ENCODE measurements at regions of chr6 and their contacts with region 1.

Region 1: DNA sequence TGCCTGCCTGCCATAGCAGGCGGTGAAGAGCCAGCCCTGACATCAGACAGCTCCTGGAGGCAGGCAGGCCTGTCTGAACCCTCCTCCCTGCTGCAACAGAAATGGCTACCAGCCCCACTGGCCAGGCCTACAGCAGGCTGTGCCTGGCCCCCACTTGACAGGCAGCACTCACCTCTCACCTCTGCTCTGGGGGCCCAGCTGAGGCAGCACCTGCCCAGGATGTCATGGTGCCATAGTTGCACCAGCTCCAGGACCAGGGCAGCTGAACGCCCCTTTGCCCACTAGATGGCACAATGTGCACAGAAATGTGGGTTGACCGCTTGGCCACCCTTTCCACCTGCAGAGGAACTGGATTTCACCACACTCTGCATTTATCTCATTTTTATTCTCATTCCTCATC is 30.6 kb downstream of the MRPL14 start:
- DNase-seq: peak; percentile 69 to 87 (median 78)
- ATAC-seq: peak; percentile 82 to 92 (median 88)
- H3K4me3 ChIP-seq: no peak overlapping the region
- H3K27ac ChIP-seq: no peak overlapping the region
- H3K4me1 ChIP-seq: peaks cover 0 to 10% (median 0%) of the 10 kb centered on the region in 3 donors
- H3K27me3 ChIP-seq: no peaks in the 10 kb centered on the region
- CTCF ChIP-seq: peak; percentile 62 to 76 (median 70)

Region 2: DNA sequence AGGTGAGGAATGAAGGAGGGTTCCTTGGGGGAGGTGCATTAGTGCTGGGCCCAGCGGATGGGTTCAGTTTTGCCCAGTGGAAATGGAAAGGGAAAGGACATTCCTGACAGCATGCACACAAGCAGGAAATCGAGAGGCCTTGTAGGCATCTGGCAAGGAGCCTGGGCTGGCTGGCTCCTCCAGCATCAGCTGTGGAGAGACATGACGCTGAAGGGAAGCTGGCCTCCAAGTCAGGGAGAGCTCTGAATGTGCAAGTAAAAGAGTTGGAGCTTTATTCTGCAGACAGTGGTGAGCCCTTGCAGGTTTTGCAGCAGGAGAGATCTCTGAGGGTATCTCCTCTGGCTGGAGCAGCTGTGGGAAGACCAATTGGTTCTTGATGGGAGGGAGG is 123.7 kb before region 1 on chr6:
- intact Hi-C with region 1: no loop called
- DNase-seq: peak in 5 of 6 donors; percentile 79 to 83 (median 80)
- ATAC-seq: peak; percentile 66 to 85 (median 73)
- H3K4me3 ChIP-seq: no peak overlapping the region
- H3K27ac ChIP-seq: peak overlapping the region; percentile 57 to 80 (median 61)
- H3K4me1 ChIP-seq: peaks cover 32 to 39% (median 35%) of the 10 kb centered on the region in 3 donors
- H3K27me3 ChIP-seq: no peaks in the 10 kb centered on the region
- CTCF ChIP-seq: no peak

Region 3: GRCh38 chr6:44135875-44136274 is 39.3 kb after region 1 on chr6:
- intact Hi-C with region 1: loop called in 1 of 3 experiments (anchors 5 kb)
- DNase-seq: no peak
- ATAC-seq: no peak
- H3K4me3 ChIP-seq: no peak overlapping the region
- H3K27ac ChIP-seq: no peak overlapping the region
- H3K4me1 ChIP-seq: no peaks in the 10 kb centered on the region
- H3K27me3 ChIP-seq: no peaks in the 10 kb centered on the region
- CTCF ChIP-seq: no peak

Region 4: GRCh38 chr6:44151348-44152108 is 54.9 kb after region 1 on chr6:
- intact Hi-C with region 1: loop called in 2 of 3 experiments (anchors 5 kb)
- DNase-seq: peak; percentile 64 to 94 (median 82)
- ATAC-seq: peak; percentile 51 to 87 (median 76)
- H3K4me3 ChIP-seq: no peak overlapping the region
- H3K27ac ChIP-seq: no peak overlapping the region
- H3K4me1 ChIP-seq: peaks cover 1 to 10% (median 7%) of the 10 kb centered on the region in 3 donors
- H3K27me3 ChIP-seq: no peaks in the 10 kb centered on the region
- CTCF ChIP-seq: peak; percentile 97 to 100 (median 99)

Region 5: DNA sequence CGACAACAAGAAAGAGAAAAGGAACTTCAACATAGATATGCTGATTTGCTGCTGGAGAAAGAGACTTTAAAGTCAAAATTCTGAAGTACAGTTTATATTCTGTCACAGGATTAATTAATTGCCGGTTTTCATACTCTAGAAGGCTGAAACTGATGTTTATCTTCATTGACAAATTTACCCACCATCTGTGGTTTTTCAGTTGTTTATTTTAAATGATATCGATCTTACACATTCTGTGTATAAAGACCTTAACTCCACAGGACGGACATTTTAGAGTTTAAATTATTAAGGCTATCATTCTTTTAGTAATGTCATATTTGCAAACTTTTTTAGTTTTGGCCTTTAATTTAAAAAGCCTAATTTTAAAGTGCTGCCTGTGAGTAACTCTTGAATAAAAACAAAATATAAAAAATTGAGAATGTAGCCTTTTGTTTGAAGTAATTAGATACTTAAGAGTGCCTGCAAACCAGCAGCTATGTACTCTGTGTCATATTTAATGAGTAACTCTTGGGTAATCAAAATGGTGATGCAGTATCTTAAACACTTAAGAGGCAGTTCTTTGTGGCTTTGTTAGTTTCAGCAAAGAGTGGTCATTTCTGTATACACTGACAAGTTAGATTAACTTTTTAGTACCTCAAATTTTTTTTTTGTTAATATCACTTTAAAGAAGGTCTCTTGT is 350.2 kb after region 1 on chr6:
- intact Hi-C with region 1: no loop called
- DNase-seq: no peak
- ATAC-seq: peak; percentile 86 to 94 (median 93)
- H3K4me3 ChIP-seq: no peak overlapping the region
- H3K27ac ChIP-seq: peak overlapping the region in 2 of 4 donors; percentile 56 to 61
- H3K4me1 ChIP-seq: peaks cover 16 to 29% (median 19%) of the 10 kb centered on the region in 3 donors
- H3K27me3 ChIP-seq: no peaks in the 10 kb centered on the region
- CTCF ChIP-seq: no peak

Measured in pancreas (tissue), 10 donors.